ENCODE measurements at regions of chr7 and their contacts with region 1.

Region 1: DNA sequence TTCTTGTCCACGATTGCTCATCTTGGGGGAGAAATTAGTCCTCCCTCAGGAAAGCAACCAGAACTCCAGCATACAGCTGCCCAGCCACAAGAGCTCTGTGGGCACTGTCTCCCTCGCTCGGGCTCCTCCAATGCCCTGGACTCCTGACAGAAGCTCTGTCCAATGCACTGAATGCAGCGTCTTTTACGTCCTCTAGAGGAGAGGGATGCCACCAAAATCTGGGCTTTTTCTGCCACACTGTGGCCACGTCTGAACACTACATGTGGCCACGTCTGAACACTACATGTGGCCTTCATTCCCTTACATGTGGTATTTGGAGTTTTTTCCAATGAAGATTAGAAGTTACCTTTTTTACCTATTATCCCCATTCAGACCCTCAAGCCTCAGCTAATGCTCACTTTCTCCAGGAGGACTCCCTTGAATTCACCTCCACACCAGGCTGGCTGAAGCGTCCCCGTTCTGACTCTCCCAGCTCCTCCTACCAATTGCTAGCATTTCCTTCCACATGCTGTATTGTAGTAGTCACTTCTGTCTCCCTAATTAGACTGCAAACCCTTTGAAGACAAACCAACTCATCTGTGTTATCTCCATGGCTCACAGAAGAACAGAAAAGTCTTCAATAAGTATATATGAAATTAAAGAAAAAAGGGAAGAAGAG is 134.3 kb upstream of the PDE1C start:
- DNase-seq: peak; percentile 87
- H3K4me3 Mint-ChIP-seq: peak overlapping the region; percentile 38
- H3K27ac Mint-ChIP-seq: no peak overlapping the region
- H3K4me1 Mint-ChIP-seq: no peaks in the 10 kb centered on the region
- H3K27me3 Mint-ChIP-seq: peaks cover 10% of the 10 kb centered on the region
- CTCF ChIP-seq: peak; percentile 92

Region 2: GRCh38 chr7:31744294-31744874 is 460.1 kb before region 1 on chr7:
- CTCF ChIA-PET with region 1: interaction called, 191 read pairs
- POLR2A ChIA-PET with region 1: interaction called, 7 read pairs
- intact Hi-C with region 1: loop called (anchors 1 kb)
- DNase-seq: peak; percentile 78
- H3K4me3 Mint-ChIP-seq: no peak overlapping the region
- H3K27ac Mint-ChIP-seq: no peak overlapping the region
- H3K4me1 Mint-ChIP-seq: peaks cover 5% of the 10 kb centered on the region
- H3K27me3 Mint-ChIP-seq: peaks cover 39% of the 10 kb centered on the region
- CTCF ChIP-seq: peak; percentile 92

Region 3: DNA sequence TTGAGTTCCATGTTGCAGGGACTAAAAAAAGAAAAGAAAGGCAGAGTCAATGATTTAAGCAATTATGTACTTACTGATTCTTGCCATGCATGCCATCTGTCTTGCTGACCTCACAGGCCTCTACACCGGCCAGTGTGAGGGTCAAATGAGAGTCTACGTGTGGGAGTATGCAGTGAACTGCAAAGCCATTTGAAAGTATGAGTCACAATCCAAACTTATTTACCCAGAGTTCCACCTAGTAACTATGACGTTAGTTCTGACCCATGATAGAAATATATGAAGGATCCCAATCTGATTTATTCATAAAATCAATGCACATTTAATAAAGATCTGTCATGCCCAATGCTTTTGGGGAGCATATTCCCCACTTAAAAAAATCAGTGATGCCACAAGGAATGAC is 160.8 kb before region 1 on chr7:
- CTCF ChIA-PET with region 1: no interaction called
- POLR2A ChIA-PET with region 1: no interaction called
- intact Hi-C with region 1: loop called (anchors 5 kb)
- DNase-seq: peak; percentile 57
- H3K4me3 Mint-ChIP-seq: no peak overlapping the region
- H3K27ac Mint-ChIP-seq: no peak overlapping the region
- H3K4me1 Mint-ChIP-seq: no peaks in the 10 kb centered on the region
- H3K27me3 Mint-ChIP-seq: no peaks in the 10 kb centered on the region
- CTCF ChIP-seq: no peak

Region 4: GRCh38 chr7:32239764-32240163 is 35.3 kb after region 1 on chr7:
- CTCF ChIA-PET with region 1: interaction called, 10 read pairs
- POLR2A ChIA-PET with region 1: no interaction called
- intact Hi-C with region 1: no loop called
- DNase-seq: no peak
- H3K4me3 Mint-ChIP-seq: no peak overlapping the region
- H3K27ac Mint-ChIP-seq: no peak overlapping the region
- H3K4me1 Mint-ChIP-seq: no peaks in the 10 kb centered on the region
- H3K27me3 Mint-ChIP-seq: peaks cover 4% of the 10 kb centered on the region
- CTCF ChIP-seq: no peak

Region 5: GRCh38 chr7:32357535-32358277 is 153.2 kb after region 1 on chr7:
- CTCF ChIA-PET with region 1: interaction called, 619 read pairs
- POLR2A ChIA-PET with region 1: interaction called, 4 read pairs
- intact Hi-C with region 1: no loop called
- DNase-seq: peak; percentile 32
- H3K4me3 Mint-ChIP-seq: no peak overlapping the region
- H3K27ac Mint-ChIP-seq: no peak overlapping the region
- H3K4me1 Mint-ChIP-seq: no peaks in the 10 kb centered on the region
- H3K27me3 Mint-ChIP-seq: peaks cover 46% of the 10 kb centered on the region
- CTCF ChIP-seq: peak; percentile 39

Region 6: DNA sequence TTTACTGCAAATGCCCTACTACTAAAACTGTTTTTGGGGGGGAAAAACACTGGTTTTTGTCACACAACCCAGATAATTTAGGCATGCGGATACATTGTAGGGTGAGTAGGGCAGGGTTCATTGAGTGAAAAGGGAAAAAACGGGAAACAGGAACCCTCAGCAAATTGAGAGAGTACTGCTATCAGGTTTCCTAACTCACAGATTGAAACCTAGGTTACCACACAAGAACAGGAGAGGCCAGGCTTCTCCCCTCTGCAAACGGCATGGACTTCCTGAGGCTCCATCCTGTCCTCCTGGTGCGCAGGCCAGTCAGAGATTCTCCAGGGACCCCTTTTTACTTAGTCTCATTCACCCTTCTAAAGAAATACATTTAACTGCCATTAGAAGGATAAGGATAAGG is 321.3 kb after region 1 on chr7:
- CTCF ChIA-PET with region 1: no interaction called
- POLR2A ChIA-PET with region 1: no interaction called
- intact Hi-C with region 1: no loop called
- DNase-seq: no peak
- H3K4me3 Mint-ChIP-seq: no peak overlapping the region
- H3K27ac Mint-ChIP-seq: no peak overlapping the region
- H3K4me1 Mint-ChIP-seq: no peaks in the 10 kb centered on the region
- H3K27me3 Mint-ChIP-seq: no peaks in the 10 kb centered on the region
- CTCF ChIP-seq: no peak